Activated CD4-positive, alpha-beta memory T cell treated with anti-CD3 and anti-CD28 coated beads, Interleukin-2, amount 10 ng/mL, durations not matched to agents 7 days and 5 days (primary cell): ENCODE measurements at regions of chr1 and their contacts with region 1.

Region 1: DNA sequence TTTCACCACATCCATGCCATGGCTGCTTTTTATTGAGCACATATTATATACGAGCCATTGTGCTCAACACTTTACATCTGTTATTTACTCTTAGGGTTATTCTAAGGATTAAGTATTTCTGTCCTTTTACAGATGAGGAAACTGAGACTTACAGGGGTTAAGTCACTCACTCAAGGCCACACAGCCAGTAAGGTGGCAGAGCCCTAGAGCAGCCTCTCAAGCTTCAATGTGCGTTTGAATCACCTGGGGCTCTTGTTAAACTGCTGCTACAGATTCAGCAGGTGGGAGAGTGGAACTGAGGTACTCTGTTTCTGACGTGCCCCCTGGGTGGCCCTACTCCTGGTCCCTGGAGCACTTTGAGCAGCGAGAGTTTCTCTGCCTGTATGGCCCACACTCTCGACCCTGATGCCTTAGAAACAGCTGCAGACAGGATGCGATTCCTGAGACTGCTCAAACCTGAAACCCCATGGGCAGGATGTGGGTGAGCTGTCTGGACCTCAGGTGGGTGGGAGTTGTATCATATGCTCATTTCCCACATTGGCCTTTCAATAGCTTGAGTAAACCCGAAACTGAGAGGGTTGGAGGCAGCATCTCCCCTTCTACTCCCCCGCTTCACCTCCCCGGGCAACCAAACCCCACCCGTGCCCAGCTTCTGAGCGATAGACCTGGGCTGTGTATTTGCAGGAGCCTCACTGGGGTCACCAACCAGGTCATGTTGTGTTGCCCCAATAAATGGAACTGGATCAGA is 59.3 kb downstream of the MAN1C1 start:
- DNase-seq: peak; percentile 92
- H3K4me3 Mint-ChIP-seq: peak overlapping the region; percentile 22
- H3K27ac Mint-ChIP-seq: peak overlapping the region; percentile 23
- H3K4me1 Mint-ChIP-seq: peaks cover 51% of the 10 kb centered on the region
- H3K27me3 Mint-ChIP-seq: peaks cover 84% of the 10 kb centered on the region

Region 2: GRCh38 chr1:25549273-25550154 is 126.4 kb before region 1 on chr1:
- CTCF ChIA-PET with region 1: no interaction called
- POLR2A ChIA-PET with region 1: interaction called, 12 read pairs
- DNase-seq: peak; percentile 90
- H3K4me3 Mint-ChIP-seq: peak overlapping the region; percentile 45
- H3K27ac Mint-ChIP-seq: peak overlapping the region; percentile 94
- H3K4me1 Mint-ChIP-seq: peaks cover 80% of the 10 kb centered on the region
- H3K27me3 Mint-ChIP-seq: peaks cover 1% of the 10 kb centered on the region

Region 3: DNA sequence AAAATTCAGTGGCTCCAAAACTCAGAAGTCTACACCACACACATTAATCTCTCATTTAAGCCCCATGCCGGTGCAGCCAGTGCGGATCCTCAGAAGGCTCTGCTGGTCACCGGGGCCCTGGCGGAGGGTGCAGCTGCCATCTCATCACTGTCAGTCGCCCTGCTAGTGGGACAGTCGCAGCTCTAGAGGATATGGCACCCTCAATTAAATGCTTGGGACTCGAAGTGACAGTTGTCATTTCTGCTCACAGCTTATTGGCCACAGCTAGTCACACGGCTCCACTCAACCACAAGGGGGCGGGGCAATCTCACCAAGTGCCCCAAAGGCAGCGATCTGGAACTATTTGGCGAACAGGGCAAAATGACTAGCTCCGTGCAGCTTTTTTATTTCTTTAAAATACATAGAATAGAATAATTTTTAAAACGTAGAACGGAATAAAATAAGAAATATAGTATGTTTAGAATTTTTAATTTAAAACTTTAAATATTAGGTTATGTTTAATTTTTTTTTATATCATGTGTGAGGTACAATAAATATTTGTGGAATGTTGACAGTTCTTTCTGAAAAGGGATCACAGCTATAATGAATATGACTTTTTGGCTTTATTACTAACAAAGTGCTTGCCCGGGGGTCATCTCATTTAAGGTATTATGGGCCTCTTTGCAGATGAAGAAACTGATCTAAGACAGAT is 67.3 kb before region 1 on chr1:
- CTCF ChIA-PET with region 1: interaction called, 13 read pairs
- POLR2A ChIA-PET with region 1: interaction called, 11 read pairs
- DNase-seq: peak; percentile 91
- H3K4me3 Mint-ChIP-seq: no peak overlapping the region
- H3K27ac Mint-ChIP-seq: no peak overlapping the region
- H3K4me1 Mint-ChIP-seq: peaks cover 8% of the 10 kb centered on the region
- H3K27me3 Mint-ChIP-seq: peaks cover 69% of the 10 kb centered on the region

Region 4: GRCh38 chr1:25616095-25616986 is 59.6 kb before region 1 on chr1 and contains the start of gene MAN1C1:
- CTCF ChIA-PET with region 1: interaction called, 19 read pairs
- POLR2A ChIA-PET with region 1: interaction called, 12 read pairs
- DNase-seq: peak; percentile 82
- H3K4me3 Mint-ChIP-seq: peak within 1 kb of the TSS; percentile 65
- H3K27ac Mint-ChIP-seq: no peak within 1 kb of the TSS
- H3K4me1 Mint-ChIP-seq: peaks cover 52% of the 10 kb centered on the region
- H3K27me3 Mint-ChIP-seq: peaks cover 51% of the 10 kb centered on the region
- total RNA-seq, gene MAN1C1: 22.3 to 24.1 TPM

Region 5: GRCh38 chr1:25642574-25643108 is 33.3 kb before region 1 on chr1:
- CTCF ChIA-PET with region 1: interaction called, 10 read pairs
- POLR2A ChIA-PET with region 1: interaction called, 28 read pairs
- DNase-seq: peak; percentile 86
- H3K4me3 Mint-ChIP-seq: peak overlapping the region; percentile 33
- H3K27ac Mint-ChIP-seq: peak overlapping the region; percentile 74
- H3K4me1 Mint-ChIP-seq: peaks cover 48% of the 10 kb centered on the region
- H3K27me3 Mint-ChIP-seq: peaks cover 71% of the 10 kb centered on the region

Region 6: GRCh38 chr1:25754470-25755181 is 78.7 kb after region 1 on chr1:
- CTCF ChIA-PET with region 1: no interaction called
- POLR2A ChIA-PET with region 1: no interaction called
- DNase-seq: no peak
- H3K4me3 Mint-ChIP-seq: no peak overlapping the region
- H3K27ac Mint-ChIP-seq: no peak overlapping the region
- H3K4me1 Mint-ChIP-seq: no peaks in the 10 kb centered on the region
- H3K27me3 Mint-ChIP-seq: no peaks in the 10 kb centered on the region

Region 7: DNA sequence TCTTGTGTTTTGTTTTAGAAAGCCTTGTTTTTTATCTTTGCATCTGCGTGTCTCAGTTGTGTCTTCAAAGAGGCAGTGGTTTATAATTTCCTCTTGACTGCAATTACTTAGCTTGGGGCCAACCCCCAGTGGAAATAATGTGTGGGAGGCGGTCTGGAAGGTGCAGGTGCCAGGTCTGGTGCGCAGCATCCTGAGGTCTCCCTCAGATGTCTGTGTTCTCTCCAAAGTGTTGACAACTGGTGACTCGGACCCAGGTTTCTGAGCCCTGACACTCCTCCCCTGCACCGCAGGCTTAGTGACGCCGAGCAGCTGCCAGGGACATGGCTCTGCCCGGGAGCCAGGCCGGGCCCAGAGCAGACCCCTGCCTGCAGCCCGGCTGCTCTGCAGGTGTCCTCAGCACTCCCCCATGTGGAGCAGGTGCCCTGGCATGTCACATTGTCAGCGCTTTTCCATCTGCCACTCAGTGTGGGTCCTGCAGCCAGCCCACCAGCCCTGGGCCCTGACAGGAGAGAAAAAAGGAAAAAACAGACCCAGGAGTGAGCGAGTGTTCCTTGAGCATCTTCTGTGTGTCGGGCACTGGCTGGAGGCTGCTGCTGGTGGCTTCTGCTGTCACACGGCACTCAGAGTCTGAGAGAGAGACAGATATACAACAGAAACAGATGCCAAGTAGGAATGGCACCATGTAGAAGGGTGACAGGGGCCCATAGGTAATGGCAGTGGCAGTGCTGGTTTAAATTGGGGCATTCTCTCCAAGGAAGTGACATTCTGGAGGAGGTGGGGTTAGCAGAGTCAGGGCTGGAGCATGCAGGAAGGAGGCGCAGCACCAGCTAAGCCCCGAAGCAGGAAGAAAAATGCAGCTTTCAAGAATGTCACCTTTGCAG is 99.3 kb after region 1 on chr1:
- CTCF ChIA-PET with region 1: no interaction called
- POLR2A ChIA-PET with region 1: interaction called, 19 read pairs
- DNase-seq: peak; percentile 78
- H3K4me3 Mint-ChIP-seq: peak overlapping the region; percentile 3
- H3K27ac Mint-ChIP-seq: peak overlapping the region; percentile 54
- H3K4me1 Mint-ChIP-seq: peaks cover 27% of the 10 kb centered on the region
- H3K27me3 Mint-ChIP-seq: peaks cover 2% of the 10 kb centered on the region